Activated CD8-positive, alpha-beta T cell treated with anti-CD3 and anti-CD28 coated beads for 36 hours (primary cell): ENCODE measurements at regions of chr7 and their contacts with region 1.

Region 1: GRCh38 chr7:73667344-73668102 is at the start of gene VPS37D:
- DNase-seq: peak; percentile 92
- ATAC-seq: peak; percentile 95
- H3K4me3 Mint-ChIP-seq: peak within 1 kb of the TSS; percentile 67
- H3K27ac Mint-ChIP-seq: no peak within 1 kb of the TSS
- H3K4me1 Mint-ChIP-seq: peaks cover 11% of the 10 kb centered on the region
- H3K27me3 Mint-ChIP-seq: peaks cover 30% of the 10 kb centered on the region
- CTCF ChIP-seq: peak; percentile 66
- total RNA-seq, gene VPS37D: 0.87 to 1.1 TPM

Region 2: DNA sequence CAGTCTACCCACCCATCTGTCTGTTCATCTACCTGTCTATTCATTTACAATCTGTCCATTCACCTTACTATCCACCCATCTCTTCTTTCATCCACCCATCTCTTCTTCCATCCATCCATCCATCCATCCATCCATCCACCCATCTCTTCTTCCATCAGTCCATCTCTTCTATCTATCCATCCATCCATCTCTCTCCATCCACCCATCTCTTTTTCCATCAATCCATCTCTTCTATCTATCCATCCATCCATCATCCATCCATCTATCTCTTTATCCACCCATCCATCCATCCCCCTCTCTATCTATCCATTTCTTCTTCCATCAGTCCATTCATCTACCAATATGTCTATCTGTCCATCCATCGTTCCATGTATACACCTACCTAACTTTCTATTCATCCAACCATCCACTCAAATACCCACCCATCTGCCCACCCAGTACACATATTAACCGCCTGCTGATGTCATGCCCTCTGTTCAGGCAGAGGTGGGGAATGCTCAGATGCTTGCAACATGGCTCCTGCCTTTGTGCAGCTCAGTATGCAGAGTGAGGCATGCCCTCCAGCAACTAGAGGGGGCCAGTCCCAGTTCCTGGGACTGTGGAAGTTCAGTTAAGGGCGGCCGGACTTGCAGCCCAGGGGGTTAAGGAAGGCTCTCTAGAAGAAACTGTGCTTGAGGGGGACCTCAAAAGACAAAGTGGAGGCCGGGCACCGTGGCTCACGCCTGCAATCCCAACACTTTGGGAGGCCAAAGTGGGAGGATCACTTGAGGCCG is 31.9 kb before region 1 on chr7:
- CTCF ChIA-PET with region 1: no interaction called
- POLR2A ChIA-PET with region 1: no interaction called
- intact Hi-C with region 1: no loop called
- DNase-seq: no peak
- ATAC-seq: no peak
- H3K4me3 Mint-ChIP-seq: no peak overlapping the region
- H3K27ac Mint-ChIP-seq: no peak overlapping the region
- H3K4me1 Mint-ChIP-seq: peaks cover 5% of the 10 kb centered on the region
- H3K27me3 Mint-ChIP-seq: peaks cover 14% of the 10 kb centered on the region
- CTCF ChIP-seq: no peak

Region 3: DNA sequence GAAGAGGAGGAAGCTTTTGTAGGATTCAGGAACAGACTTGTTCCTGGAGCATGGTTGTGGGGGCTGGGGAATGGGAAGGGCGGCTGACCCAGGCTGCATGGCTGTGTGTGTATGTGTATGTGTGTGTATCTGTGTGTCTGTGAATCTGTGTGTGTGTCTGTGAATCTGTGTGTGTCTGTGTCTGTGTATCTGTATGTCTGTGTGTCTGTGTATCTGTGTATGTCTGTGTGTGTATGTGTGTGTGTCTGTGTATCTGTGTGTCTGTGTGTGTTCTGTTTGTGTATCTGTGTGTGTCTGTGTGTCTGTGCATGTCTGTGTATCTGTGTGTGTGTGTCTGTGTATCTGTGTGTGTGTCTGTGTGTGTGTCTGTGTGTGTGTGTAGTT is 58.6 kb after region 1 on chr7:
- CTCF ChIA-PET with region 1: interaction called, 5 read pairs
- POLR2A ChIA-PET with region 1: no interaction called
- intact Hi-C with region 1: loop called (anchors 5 kb)
- DNase-seq: no peak
- ATAC-seq: peak; percentile 24
- H3K4me3 Mint-ChIP-seq: no peak overlapping the region
- H3K27ac Mint-ChIP-seq: no peak overlapping the region
- H3K4me1 Mint-ChIP-seq: no peaks in the 10 kb centered on the region
- H3K27me3 Mint-ChIP-seq: peaks cover 6% of the 10 kb centered on the region
- CTCF ChIP-seq: peak; percentile 46